Naive thymus-derived CD4-positive, alpha-beta T cell (primary cell): ENCODE measurements at regions of chr11 and their contacts with region 1.

Region 1: GRCh38 chr11:73538381-73538872 is 59.5 kb downstream of the FAM168A start:
- DNase-seq: peak in 4 of 9 donors; percentile 4 to 31 (median 20)
- ATAC-seq: peak; percentile 57
- H3K4me3 ChIP-seq: no peak overlapping the region
- H3K4me3 Mint-ChIP-seq: peak overlapping the region; percentile 20 to 70 (median 50)
- H3K27ac ChIP-seq: peak overlapping the region; percentile 26
- H3K27ac Mint-ChIP-seq: peak overlapping the region; percentile 49 to 93 (median 78)
- H3K4me1 ChIP-seq: peaks cover 8 to 9% of the 10 kb centered on the region in 2 donors
- H3K4me1 Mint-ChIP-seq: peaks cover 17 to 54% (median 44%) of the 10 kb centered on the region in 7 donors
- H3K27me3 ChIP-seq: no peaks in the 10 kb centered on the region
- H3K27me3 Mint-ChIP-seq: no peaks in the 10 kb centered on the region

Region 2: GRCh38 chr11:73360336-73361013 is 178.0 kb before region 1 on chr11:
- CTCF ChIA-PET with region 1: no interaction called
- POLR2A ChIA-PET with region 1: interaction called, 10 read pairs
- intact Hi-C with region 1: no loop called
- DNase-seq: peak in 5 of 9 donors; percentile 24 to 35 (median 31)
- ATAC-seq: peak; percentile 56
- H3K4me3 ChIP-seq: no peak overlapping the region
- H3K4me3 Mint-ChIP-seq: no peak overlapping the region
- H3K27ac ChIP-seq: no peak overlapping the region
- H3K27ac Mint-ChIP-seq: peak overlapping the region in 6 of 9 donors; percentile 6 to 72 (median 31)
- H3K4me1 ChIP-seq: peaks cover 2 to 6% of the 10 kb centered on the region in 2 donors
- H3K4me1 Mint-ChIP-seq: peaks cover 0 to 4% (median 0%) of the 10 kb centered on the region in 7 donors
- H3K27me3 ChIP-seq: no peaks in the 10 kb centered on the region
- H3K27me3 Mint-ChIP-seq: no peaks in the 10 kb centered on the region

Region 3: GRCh38 chr11:73520353-73521061 is 17.9 kb before region 1 on chr11:
- CTCF ChIA-PET with region 1: no interaction called
- POLR2A ChIA-PET with region 1: no interaction called
- intact Hi-C with region 1: loop called in 1 of 2 experiments (anchors 1 kb)
- DNase-seq: no peak
- ATAC-seq: no peak
- H3K4me3 ChIP-seq: no peak overlapping the region
- H3K4me3 Mint-ChIP-seq: peak overlapping the region in 3 of 10 donors; percentile 25 to 56 (median 45)
- H3K27ac ChIP-seq: no peak overlapping the region
- H3K27ac Mint-ChIP-seq: peak overlapping the region in 5 of 9 donors; percentile 23 to 81 (median 63)
- H3K4me1 ChIP-seq: peaks cover 0 to 5% of the 10 kb centered on the region in 2 donors
- H3K4me1 Mint-ChIP-seq: peaks cover 19 to 33% (median 26%) of the 10 kb centered on the region in 7 donors
- H3K27me3 ChIP-seq: no peaks in the 10 kb centered on the region
- H3K27me3 Mint-ChIP-seq: no peaks in the 10 kb centered on the region

Region 4: DNA sequence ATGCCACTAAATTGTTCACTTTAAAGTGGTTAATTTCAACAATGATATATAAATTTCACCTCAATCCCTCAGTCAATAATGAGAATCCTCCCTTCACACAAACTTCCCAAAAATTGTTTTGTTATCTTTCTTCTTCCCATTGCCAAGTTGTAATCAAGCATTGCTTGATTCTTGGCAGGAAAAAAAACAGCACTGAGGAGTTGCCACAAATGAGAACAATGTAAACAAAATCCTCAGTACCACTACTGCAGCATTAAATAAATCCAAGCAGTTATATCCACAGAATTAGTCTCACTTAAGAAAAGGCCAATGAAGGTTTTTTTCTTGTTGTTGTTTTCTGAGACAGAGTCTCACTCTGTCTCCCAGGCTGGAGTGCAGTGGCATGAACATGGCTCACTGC is 21.3 kb after region 1 on chr11:
- CTCF ChIA-PET with region 1: no interaction called
- POLR2A ChIA-PET with region 1: no interaction called
- intact Hi-C with region 1: no loop called
- DNase-seq: no peak
- ATAC-seq: no peak
- H3K4me3 ChIP-seq: no peak overlapping the region
- H3K4me3 Mint-ChIP-seq: no peak overlapping the region
- H3K27ac ChIP-seq: no peak overlapping the region
- H3K27ac Mint-ChIP-seq: no peak overlapping the region
- H3K4me1 ChIP-seq: no peaks in the 10 kb centered on the region
- H3K4me1 Mint-ChIP-seq: peaks cover 0 to 21% (median 5%) of the 10 kb centered on the region in 7 donors
- H3K27me3 ChIP-seq: no peaks in the 10 kb centered on the region
- H3K27me3 Mint-ChIP-seq: no peaks in the 10 kb centered on the region

Region 5: GRCh38 chr11:74248469-74248868 is 710.0 kb after region 1 on chr11:
- CTCF ChIA-PET with region 1: no interaction called
- POLR2A ChIA-PET with region 1: no interaction called
- intact Hi-C with region 1: no loop called
- DNase-seq: no peak
- ATAC-seq: no peak
- H3K4me3 ChIP-seq: no peak overlapping the region
- H3K4me3 Mint-ChIP-seq: no peak overlapping the region
- H3K27ac ChIP-seq: no peak overlapping the region
- H3K27ac Mint-ChIP-seq: no peak overlapping the region
- H3K4me1 ChIP-seq: no peaks in the 10 kb centered on the region
- H3K4me1 Mint-ChIP-seq: no peaks in the 10 kb centered on the region
- H3K27me3 ChIP-seq: no peaks in the 10 kb centered on the region
- H3K27me3 Mint-ChIP-seq: no peaks in the 10 kb centered on the region